Ascending aorta (tissue), 2 donors: ENCODE measurements at regions of chr10 and their contacts with region 1.

Region 1: GRCh38 chr10:119305860-119306513 is 98.6 kb downstream of the GRK5 start:
- DNase-seq: peak; percentile 92 to 97
- H3K4me3 ChIP-seq: peak overlapping the region in 1 of 2 donors; percentile 28
- H3K27ac ChIP-seq: peak overlapping the region; percentile 85 to 95
- H3K4me1 ChIP-seq: peaks cover 32 to 87% of the 10 kb centered on the region in 2 donors
- H3K27me3 ChIP-seq: no peaks in the 10 kb centered on the region
- CTCF ChIP-seq: no peak

Region 2: DNA sequence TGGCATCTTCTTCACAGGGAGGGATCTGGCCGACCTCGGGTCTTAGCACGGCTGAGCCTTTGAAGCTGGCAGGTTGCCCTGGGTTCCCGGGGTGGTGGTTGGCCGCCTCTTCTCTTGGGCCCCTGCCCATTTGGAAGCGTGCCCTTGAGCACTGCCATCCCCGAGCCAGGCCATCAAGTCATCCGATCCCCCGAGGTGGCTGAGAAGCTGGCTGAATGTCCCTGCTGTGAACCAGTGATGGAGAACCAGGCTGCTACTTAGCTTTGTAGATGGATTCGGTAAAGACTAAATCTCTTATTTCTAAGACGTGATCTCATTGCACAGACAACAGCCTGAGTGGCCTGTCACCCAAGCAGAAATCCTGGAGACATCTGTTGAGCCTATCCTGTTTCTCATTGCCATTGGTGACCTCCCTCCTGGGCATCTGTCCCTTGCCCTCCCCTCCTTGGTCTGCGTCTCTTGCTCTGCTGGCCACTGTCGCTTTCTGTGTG is 24.4 kb before region 1 on chr10:
- intact Hi-C with region 1: loop called (anchors 2 kb)
- DNase-seq: peak in 1 of 2 donors; percentile 89
- H3K4me3 ChIP-seq: peak overlapping the region in 1 of 2 donors; percentile 7
- H3K27ac ChIP-seq: peak overlapping the region; percentile 39 to 58
- H3K4me1 ChIP-seq: peaks cover 17 to 49% of the 10 kb centered on the region in 2 donors
- H3K27me3 ChIP-seq: no peaks in the 10 kb centered on the region
- CTCF ChIP-seq: no peak